SK-N-SH (cell line): ENCODE measurements at regions of chr16 and their contacts with region 1.

Region 1: DNA sequence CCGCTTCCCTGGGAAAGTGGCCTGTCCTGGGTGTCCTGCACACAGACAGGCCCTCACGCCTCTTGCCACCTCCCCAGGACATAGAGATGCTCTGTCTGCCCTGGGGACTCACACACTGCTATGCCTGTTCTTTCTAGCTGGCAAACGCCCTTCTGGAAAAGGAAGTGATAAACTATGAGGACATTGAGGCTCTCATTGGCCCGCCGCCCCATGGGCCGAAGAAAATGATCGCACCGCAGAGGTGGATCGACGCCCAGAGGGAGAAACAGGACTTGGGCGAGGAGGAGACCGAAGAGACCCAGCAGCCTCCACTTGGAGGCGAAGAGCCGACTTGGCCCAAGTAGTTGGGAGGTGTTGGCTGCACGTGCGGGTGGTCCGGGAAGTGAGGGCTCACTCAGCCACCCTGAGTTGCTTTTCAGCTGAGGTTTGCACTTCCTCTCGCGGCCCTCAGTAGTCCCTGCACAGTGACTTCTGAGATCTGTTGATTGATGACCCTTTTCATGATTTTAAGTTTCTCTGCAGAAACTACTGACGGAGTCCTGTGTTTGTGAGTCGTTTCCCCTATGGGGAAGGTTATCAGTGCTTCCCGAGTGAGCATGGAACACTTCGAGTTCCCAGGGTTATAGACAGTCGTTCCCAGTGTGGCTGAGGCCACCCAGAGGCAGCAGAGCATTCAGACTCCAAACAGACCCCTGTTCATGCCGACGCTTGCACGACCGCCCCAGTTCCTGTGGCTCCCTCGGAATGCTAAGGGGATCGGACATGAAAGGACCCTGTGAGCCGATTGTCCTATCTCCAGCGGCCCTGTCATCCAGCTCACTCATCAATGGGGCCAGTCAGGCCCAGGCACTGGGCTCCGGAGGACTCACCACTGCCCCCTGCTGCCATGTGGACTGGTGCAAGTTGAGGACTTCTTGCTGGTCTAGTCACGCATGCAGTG is 3.5 kb upstream of the RPL13 start:
- DNase-seq: peak; percentile 88
- H3K4me3 ChIP-seq: no peak overlapping the region
- H3K27ac ChIP-seq: no peak overlapping the region; a peak in 1 of 4 replicates
- H3K4me1 ChIP-seq: peaks cover 0 to 6% of the 10 kb centered on the region in 2 experiments; a peak in 2 of 4 replicates
- H3K27me3 ChIP-seq: no peaks in the 10 kb centered on the region
- CTCF ChIP-seq: peak; percentile 83
- EP300 ChIP-seq: no peak
- RAD21 ChIP-seq: peak; percentile 65

Region 2: DNA sequence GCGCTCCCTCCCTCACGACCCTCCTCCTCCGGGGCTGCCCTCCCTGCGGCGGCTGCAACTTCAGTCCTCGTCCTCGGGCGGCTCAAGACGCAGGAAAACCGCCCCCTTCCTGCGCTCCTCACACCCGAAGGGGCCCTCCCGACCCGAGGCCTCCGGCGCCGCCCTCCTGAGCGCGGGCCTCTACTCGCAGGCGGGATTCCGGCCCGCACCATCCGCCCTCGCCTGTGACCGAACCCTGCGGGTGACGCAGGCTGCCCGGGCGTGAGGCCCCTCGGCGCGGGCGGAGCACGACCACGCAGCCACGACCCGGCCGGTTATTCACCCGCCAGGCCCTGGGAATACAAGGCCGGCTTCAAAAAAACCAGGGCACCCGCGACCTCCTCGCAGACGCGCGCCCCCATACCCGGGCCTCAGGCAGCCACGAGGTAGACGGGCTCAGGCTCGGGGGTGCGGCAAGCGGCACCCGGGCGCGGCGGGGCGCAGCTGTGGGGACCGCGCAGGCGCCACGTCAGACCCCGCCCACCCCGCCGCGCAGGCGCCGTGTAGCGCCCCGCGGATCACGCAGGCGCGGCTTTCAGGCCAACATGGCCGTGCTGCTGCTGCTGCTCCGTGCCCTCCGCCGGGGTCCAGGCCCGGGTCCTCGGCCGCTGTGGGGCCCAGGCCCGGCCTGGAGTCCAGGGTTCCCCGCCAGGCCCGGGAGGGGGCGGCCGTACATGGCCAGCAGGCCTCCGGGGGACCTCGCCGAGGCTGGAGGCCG is 49.0 kb before region 1 on chr16 and contains the start of gene SPG7:
- CTCF ChIA-PET with region 1: interaction called, 10 read pairs
- POLR2A ChIA-PET with region 1: no interaction called
- DNase-seq: peak; percentile 99
- H3K4me3 ChIP-seq: peak within 1 kb of the TSS; percentile 73 to 83
- H3K27ac ChIP-seq: peak within 1 kb of the TSS; percentile 76 to 79
- H3K4me1 ChIP-seq: peaks cover 3 to 13% of the 10 kb centered on the region in 2 experiments; a peak in 2 of 4 replicates
- H3K27me3 ChIP-seq: no peaks in the 10 kb centered on the region
- CTCF ChIP-seq: no peak
- EP300 ChIP-seq: no peak
- RAD21 ChIP-seq: no peak
- polyA plus RNA-seq, gene SPG7: 100 and 107 TPM in 2 replicates

Region 3: DNA sequence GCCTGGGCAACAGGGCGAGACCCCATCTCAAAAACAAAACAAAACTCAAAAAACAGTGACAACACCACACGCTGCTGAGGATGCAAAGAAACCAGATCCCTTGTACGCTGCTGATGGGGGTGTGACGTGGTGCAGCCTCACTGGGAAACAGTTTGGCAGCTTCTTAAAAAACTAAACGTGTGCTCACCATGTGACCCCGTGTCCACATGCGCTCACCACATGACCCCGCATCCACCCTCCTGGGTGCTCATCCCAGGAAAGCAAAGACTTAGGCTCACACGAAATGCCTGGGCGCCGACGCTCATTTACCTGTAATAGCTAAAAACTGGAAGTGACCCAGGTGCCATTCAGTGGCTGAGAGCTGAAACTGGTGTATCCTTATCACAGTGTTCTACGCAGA is 16.5 kb before region 1 on chr16:
- CTCF ChIA-PET with region 1: interaction called, 19 read pairs
- POLR2A ChIA-PET with region 1: no interaction called
- DNase-seq: no peak
- H3K4me3 ChIP-seq: no peak overlapping the region
- H3K27ac ChIP-seq: no peak overlapping the region
- H3K4me1 ChIP-seq: no peaks in the 10 kb centered on the region
- H3K27me3 ChIP-seq: no peaks in the 10 kb centered on the region
- CTCF ChIP-seq: no peak
- EP300 ChIP-seq: no peak
- RAD21 ChIP-seq: no peak